SK-N-SH (cell line): ENCODE measurements at regions of chr7 and their contacts with region 1.

Region 1: DNA sequence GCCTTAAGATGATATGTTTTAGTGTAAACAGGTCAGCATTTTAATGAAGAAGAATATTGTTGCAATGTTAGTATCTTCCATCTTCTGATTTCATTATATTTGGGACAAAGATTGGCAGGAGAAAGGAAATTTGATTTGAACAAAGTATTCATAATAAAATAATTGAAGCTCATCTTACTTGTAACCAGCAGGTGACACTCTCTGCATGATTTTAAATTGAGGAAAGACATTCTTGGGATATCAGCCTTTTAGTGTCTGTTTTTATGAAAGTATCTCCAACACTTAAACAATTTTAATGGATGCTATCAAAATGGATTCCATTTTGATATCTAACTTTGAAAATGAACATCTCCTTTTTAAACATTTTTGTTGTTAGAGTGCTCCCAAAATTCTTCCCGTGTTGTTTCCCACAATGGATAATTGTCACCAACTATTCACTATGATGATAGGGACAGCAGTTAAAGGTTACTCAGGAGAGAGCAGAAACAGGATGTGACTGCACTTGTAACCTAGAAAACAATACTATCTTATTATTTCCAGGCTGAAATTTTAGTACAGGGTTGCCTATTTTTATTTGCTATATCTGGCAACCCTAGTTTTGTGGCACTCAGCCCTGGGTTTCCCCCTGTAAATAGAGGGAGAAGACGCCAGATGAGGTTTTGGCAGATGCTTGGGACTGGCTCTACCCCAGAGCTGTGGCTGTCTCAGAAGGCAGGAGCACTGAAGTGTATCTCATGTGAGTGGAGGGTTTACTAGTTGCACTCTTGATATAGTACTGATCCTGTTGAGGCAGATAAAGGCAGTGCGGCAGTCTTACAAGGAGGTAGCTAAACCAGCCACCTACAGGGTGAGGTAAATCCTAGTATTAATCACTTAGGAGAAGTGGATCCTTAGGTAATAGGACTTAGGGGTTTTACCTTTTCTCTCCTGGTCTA is 31.0 kb upstream of the ABCB4 start:
- DNase-seq: peak; percentile 12
- H3K4me3 ChIP-seq: no peak overlapping the region
- H3K27ac ChIP-seq: no peak overlapping the region; a peak in 1 of 4 replicates
- H3K4me1 ChIP-seq: peaks cover 0 to 17% of the 10 kb centered on the region in 2 experiments; a peak in 2 of 4 replicates
- H3K27me3 ChIP-seq: no peaks in the 10 kb centered on the region
- CTCF ChIP-seq: peak; percentile 79
- EP300 ChIP-seq: no peak
- RAD21 ChIP-seq: peak; percentile 80

Region 2: DNA sequence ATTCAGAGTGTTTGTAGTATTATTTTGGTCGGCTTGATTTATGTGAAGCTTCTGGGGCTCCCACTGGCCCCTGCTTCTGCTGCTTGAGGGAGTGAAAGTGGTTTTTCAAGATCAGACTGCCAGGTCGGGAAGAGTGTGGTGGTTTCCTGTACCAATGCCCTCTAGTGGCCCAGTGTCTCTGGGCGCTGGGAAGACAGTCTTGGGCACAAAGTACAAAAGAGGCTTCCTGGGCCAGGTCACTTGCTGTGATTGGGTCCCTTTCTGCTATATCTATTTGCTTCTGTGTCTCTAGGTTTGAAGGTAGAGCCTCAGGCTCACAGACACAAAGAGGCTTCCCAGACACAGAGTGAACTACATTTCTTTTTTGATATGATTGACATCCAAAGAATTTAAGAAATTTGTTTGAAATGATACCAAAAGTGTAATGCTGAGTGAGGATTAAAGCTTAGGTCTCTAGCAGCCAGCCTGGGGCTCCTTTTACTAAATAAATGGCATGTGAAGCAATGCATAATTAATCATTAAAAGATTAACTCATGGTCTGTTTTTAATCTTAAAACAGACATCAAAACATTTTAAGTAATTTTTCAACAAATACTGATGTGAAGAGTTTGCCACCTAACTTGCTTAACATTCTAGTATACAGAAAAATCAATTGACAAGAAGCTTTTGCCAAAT is 57.9 kb after region 1 on chr7:
- CTCF ChIA-PET with region 1: interaction called, 10 read pairs
- POLR2A ChIA-PET with region 1: no interaction called
- DNase-seq: peak; percentile 25
- H3K4me3 ChIP-seq: no peak overlapping the region
- H3K27ac ChIP-seq: no peak overlapping the region
- H3K4me1 ChIP-seq: no peaks in the 10 kb centered on the region; a peak in 2 of 4 replicates
- H3K27me3 ChIP-seq: no peaks in the 10 kb centered on the region
- CTCF ChIP-seq: peak; percentile 56
- EP300 ChIP-seq: no peak
- RAD21 ChIP-seq: peak; percentile 25; the same call in 1 of the 2 replicates

Region 3: DNA sequence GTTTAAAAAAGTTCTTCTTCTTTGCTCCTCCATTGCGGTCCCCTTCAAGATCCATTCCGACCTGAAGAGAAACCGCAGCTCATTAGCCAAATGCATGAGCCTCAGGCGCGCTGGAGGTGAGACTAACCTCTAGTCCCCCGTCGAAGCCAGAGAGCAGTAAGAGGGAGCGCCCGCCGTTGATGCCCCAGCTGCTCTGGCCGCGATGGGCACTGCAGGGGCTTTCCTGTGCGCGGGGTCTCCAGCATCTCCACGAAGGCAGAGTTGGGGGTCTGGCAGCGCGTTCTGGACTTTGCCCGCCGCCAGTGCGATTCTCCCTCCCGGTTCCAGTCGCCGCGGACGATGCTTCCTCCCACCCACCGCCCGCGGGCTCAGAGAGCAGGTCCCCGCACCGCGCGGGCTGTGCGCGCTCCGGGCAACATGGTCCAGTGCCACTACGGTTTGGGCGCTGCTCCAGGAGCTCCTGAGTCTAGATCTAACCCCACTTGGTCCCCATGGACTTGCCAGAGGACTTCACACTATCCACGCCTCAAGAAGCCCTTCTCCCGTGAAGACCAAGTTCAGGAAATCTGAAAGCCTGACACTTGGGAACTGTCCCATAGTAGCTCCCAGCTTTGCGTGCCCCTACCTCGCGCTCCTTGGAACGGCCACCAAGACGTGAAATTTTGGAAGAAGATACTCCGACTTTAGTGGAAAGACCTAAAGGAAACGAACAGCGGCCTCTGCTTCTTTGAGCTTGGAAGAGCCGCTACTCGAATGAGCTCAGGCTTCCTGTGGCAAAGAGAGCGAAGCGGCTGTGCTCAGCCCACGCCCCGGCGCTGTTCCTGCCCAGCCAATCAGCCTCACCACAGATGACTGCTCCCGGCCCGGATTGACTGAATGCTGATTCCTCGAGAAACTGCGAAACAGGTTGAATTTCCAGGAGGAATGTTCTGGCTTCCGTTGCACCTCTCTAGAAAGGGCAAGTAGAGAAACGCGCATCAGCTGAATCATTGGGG is 93.9 kb after region 1 on chr7 and contains the start of gene ABCB1:
- CTCF ChIA-PET with region 1: interaction called, 11 read pairs
- POLR2A ChIA-PET with region 1: interaction called, 3 read pairs
- DNase-seq: peak; percentile 91
- H3K4me3 ChIP-seq: peak within 1 kb of the TSS; percentile 68 to 75
- H3K27ac ChIP-seq: peak within 1 kb of the TSS in 1 of 2 experiments; percentile 99; a peak in 2 of 4 replicates
- H3K4me1 ChIP-seq: peaks cover 0 to 25% of the 10 kb centered on the region in 2 experiments; a peak in 2 of 4 replicates
- H3K27me3 ChIP-seq: peaks cover 13% of the 10 kb centered on the region
- CTCF ChIP-seq: no peak
- EP300 ChIP-seq: peak in 1 of 2 experiments; percentile 43; a peak in 2 of 4 replicates
- RAD21 ChIP-seq: peak; percentile 38
- polyA plus RNA-seq, gene ABCB1: 2.0 and 5.3 TPM in 2 replicates

Region 4: DNA sequence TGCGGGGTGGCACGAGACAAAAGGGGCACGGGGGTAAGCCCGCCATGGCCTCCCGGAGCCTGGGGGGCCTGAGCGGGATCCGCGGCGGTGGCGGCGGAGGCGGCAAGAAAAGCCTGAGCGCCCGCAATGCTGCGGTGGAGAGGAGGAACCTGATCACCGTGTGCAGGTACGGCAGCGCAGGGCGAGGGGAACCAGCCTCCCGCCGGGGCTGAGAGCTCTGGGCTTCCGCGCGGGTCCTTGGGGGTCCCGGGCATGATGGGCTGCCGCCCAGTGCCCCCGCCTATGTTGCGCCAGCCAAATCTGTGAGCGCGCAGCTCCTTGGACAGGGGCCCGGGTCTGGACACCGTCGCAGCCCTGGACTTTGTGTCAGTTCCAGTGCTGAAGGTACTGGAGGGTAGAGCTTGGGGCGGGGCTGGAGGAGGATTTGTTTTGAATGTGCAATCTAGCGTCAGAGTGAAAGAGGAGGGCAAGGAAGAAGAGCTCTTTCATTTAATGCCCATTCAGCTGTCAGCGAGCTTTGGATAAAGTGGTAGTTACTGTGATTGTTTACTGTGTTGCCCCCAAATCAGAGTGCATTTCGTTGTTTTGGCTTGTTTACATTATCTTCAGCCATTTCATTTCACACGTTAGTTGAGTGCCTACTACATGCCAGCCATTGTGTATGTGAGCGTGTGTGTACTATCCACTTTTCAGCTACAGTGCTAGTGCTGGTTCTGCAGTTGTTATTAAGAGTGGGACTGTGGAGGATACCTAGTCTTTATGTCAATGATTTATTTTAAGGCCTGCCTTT is 122.5 kb after region 1 on chr7:
- CTCF ChIA-PET with region 1: interaction called, 19 read pairs
- POLR2A ChIA-PET with region 1: no interaction called
- DNase-seq: peak; percentile 74
- H3K4me3 ChIP-seq: peak overlapping the region; percentile 70 to 83
- H3K27ac ChIP-seq: peak overlapping the region in 1 of 2 experiments; percentile 5; a peak in 1 of 4 replicates
- H3K4me1 ChIP-seq: peaks cover 0 to 8% of the 10 kb centered on the region in 2 experiments; a peak in 1 of 4 replicates
- H3K27me3 ChIP-seq: 0 out of 2 replicates have a peak, but pooled peaks cover 11% of the 10 kb centered on the region
- CTCF ChIP-seq: no peak
- EP300 ChIP-seq: no peak
- RAD21 ChIP-seq: no peak

Region 5: GRCh38 chr7:87886875-87887274 is 380.4 kb after region 1 on chr7:
- CTCF ChIA-PET with region 1: interaction called, 34 read pairs
- POLR2A ChIA-PET with region 1: no interaction called
- DNase-seq: peak; percentile 17
- H3K4me3 ChIP-seq: no peak overlapping the region; a peak in 1 of 4 replicates
- H3K27ac ChIP-seq: no peak overlapping the region; a peak in 1 of 4 replicates
- H3K4me1 ChIP-seq: peaks cover 0 to 5% of the 10 kb centered on the region in 2 experiments; a peak in 2 of 4 replicates
- H3K27me3 ChIP-seq: no peaks in the 10 kb centered on the region
- CTCF ChIP-seq: peak; percentile 80
- EP300 ChIP-seq: no peak
- RAD21 ChIP-seq: peak; percentile 75